HepG2 (cell line): ENCODE measurements at regions of chr21 and their contacts with region 1.

Region 1: GRCh38 chr21:43320541-43321510 is 106.1 kb downstream of the SIK1 start:
- DNase-seq: no peak
- ATAC-seq: peak; percentile 43
- H3K4me3 ChIP-seq: peak overlapping the region in 1 of 3 experiments; percentile 5; a peak in 1 of 6 replicates
- H3K27ac ChIP-seq: no peak overlapping the region
- H3K4me1 ChIP-seq: peaks cover 26% of the 10 kb centered on the region
- H3K27me3 ChIP-seq: peaks cover 2 to 54% of the 10 kb centered on the region in 2 experiments; a peak in 3 of 5 replicates
- CTCF ChIP-seq: no peak
- EP300 ChIP-seq: no peak
- POLR2A ChIP-seq: no peak
- RAD21 ChIP-seq: no peak

Region 2: GRCh38 chr21:43333298-43334062 is 12.7 kb after region 1 on chr21:
- CTCF ChIA-PET with region 1: no interaction called
- POLR2A ChIA-PET with region 1: interaction called, 10 read pairs
- in situ Hi-C with region 1: no loop called
- intact Hi-C with region 1: no loop called
- DNase-seq: peak; percentile 68
- ATAC-seq: peak; percentile 78
- H3K4me3 ChIP-seq: peak overlapping the region; percentile 36 to 63 (median 40)
- H3K27ac ChIP-seq: peak overlapping the region; percentile 12
- H3K4me1 ChIP-seq: peaks cover 51% of the 10 kb centered on the region
- H3K27me3 ChIP-seq: peaks cover 1 to 30% of the 10 kb centered on the region in 2 experiments; a peak in 3 of 5 replicates
- CTCF ChIP-seq: 0 out of 2 replicates have a peak, but pooled peaks have one; percentile 5
- EP300 ChIP-seq: 0 out of 4 replicates have a peak, but pooled peaks of 1 of the 2 experiments have one; percentile 14
- POLR2A ChIP-seq: no peak
- RAD21 ChIP-seq: peak; percentile 11; the same call in 1 of the 2 replicates